Spleen (tissue), 13 donors: ENCODE measurements at regions of chr3 and their contacts with region 1.

Region 1: DNA sequence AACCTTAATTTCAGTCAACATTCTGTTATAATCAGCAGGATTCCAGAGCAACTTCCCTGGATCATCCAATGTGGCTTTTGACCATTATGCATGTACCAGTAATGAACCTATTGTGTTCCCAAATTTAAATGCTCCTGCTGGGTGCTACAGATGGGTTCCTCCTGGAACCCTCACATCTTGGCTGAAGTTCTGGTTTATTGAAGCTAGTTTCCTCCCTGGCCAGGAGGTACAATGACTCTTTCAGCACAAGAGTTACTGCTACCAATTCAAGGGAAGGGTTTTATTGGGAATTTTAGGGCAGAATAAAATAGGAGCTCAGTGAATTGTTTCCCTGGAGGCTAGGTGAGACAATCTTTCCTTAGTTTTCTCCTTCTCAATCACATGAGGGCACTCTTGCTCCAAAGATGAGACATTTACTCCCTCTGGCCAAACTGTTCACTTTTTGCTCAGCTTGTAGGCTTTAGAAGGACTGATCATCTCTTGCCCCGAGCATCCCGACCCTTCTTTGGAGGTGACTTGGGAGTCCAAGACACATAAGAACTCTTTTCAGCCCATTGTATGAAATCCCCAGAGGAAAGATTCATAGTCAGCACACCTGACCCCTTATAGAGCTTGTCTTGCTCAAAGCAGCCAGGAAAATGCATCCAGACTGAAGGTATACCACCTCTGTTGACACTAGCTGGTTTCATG is 8.8 kb upstream of the NPHP3 start:
- DNase-seq: no peak
- H3K4me3 ChIP-seq: no peak overlapping the region
- H3K27ac ChIP-seq: no peak overlapping the region
- H3K4me1 ChIP-seq: peaks cover 0 to 7% (median 3%) of the 10 kb centered on the region in 6 donors
- H3K27me3 ChIP-seq: peaks cover 0 to 17% (median 0%) of the 10 kb centered on the region in 7 donors
- CTCF ChIP-seq: peak in 6 of 11 experiments; percentile 20 to 39 (median 27)
- POLR2A ChIP-seq: no peak

Region 2: DNA sequence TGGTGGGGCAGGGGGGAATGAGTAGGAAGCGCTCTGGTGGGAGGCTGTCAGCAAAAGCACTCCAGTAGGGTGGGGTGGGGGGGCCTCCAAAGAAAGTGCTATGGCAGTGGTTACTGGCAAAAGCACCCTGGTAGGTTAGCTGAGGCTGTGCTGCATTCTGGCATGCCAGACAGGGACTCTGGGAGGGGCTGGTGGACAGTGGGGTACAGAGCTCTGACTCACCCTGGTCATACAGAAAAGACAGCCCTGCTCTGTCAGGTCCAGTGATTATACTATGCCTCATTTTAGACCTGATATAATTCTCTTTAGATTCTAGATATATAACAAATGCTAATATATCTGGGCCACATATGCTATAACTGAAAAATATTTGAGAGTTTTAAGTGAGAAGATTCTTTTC is 613.4 kb before region 1 on chr3:
- intact Hi-C with region 1: no loop called
- DNase-seq: no peak
- H3K4me3 ChIP-seq: no peak overlapping the region
- H3K27ac ChIP-seq: no peak overlapping the region
- H3K4me1 ChIP-seq: no peaks in the 10 kb centered on the region
- H3K27me3 ChIP-seq: no peaks in the 10 kb centered on the region
- CTCF ChIP-seq: no peak
- POLR2A ChIP-seq: no peak

Region 3: GRCh38 chr3:133040696-133041523 is 309.9 kb after region 1 on chr3:
- intact Hi-C with region 1: loop called (anchors 10 kb)
- DNase-seq: no peak
- H3K4me3 ChIP-seq: no peak overlapping the region
- H3K27ac ChIP-seq: peak overlapping the region in 1 of 8 donors; percentile 27
- H3K4me1 ChIP-seq: peaks cover 0 to 30% (median 16%) of the 10 kb centered on the region in 6 donors
- H3K27me3 ChIP-seq: peaks cover 0 to 56% (median 36%) of the 10 kb centered on the region in 7 donors
- CTCF ChIP-seq: peak; percentile 10 to 71 (median 55)
- POLR2A ChIP-seq: no peak

Region 4: DNA sequence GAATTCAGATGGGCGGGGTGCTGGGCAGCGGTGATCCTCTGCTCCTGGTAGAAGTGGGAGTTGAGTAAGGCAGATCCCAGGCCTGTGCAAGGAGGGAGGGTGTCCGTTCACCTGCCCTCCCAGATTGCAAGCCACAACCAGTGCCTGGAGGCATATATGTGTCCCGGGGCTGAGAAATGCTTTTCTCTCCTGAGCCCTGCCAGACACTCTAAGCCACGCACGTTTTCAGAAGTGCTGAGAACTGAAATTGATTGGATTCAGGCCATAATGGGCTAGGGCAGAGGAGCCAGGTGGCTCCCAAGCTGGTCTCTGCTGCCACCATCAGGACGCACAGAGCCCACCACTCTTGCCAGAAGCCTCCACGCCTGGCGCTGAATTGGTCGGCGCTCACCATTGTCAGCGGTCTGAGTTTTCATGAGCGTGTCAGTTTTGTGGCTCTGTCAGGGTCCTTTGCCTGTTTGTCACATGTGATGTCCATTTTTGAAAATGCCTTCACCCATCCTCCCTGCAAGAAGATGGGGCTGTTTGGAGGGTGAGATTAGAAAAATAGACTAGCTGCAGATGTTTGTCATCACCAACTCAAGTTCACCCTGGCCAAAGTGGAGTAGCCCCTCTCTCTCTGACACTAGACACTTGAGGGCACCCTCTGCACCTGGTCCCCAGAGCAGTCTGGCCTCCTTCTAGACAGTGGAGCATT is 653.4 kb after region 1 on chr3:
- intact Hi-C with region 1: loop called (anchors 5 kb)
- DNase-seq: no peak
- H3K4me3 ChIP-seq: no peak overlapping the region
- H3K27ac ChIP-seq: no peak overlapping the region
- H3K4me1 ChIP-seq: peaks cover 0 to 4% (median 0%) of the 10 kb centered on the region in 6 donors
- H3K27me3 ChIP-seq: no peaks in the 10 kb centered on the region
- CTCF ChIP-seq: peak; percentile 36 to 82 (median 76)
- POLR2A ChIP-seq: no peak

Region 5: DNA sequence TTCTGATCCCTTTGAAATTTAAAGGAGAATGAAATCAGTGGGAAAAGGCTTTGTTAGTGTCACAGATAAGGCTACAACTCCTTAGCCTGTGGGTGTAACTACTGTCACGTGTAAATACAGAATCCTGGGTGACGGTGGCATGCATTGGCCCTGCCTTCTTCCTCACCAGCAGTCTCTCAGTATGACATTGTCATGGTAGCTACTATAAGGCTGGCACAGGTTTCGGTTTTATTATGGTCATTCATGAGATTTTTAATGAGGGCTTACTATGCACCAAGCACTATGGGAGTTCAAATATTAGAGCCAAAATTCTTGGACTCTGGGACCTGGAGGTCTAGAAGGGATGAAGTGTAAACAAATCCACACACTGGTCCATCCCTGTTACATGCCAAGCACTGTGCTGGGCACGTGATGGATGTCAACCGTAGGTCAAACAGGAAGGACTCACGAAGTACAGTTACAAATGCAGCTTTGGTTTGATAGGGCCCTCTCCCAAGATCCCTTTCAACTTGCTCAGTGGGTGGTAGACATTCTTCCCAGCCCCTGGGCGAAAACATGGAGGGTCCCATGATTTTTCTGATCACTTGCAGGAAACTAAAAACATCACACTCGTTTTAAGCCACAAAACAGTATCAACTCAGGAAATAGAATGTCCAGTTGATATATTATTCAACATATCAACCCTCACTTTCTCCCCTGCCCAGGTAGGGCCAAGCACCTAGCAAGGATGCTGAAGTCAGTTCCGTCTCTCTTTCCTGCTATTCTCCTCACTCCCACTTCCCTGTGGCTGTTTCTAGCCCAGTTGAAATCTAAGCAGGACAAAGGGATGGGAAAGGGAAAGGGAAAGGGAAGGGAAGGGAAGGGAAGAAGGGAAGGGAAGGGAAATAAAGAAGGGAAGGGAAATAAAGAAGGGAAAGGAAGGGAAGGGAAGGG is 694.2 kb after region 1 on chr3:
- intact Hi-C with region 1: loop called (anchors 5 kb)
- DNase-seq: no peak
- H3K4me3 ChIP-seq: no peak overlapping the region
- H3K27ac ChIP-seq: peak overlapping the region in 1 of 8 donors; percentile 36
- H3K4me1 ChIP-seq: peaks cover 0 to 8% (median 5%) of the 10 kb centered on the region in 6 donors
- H3K27me3 ChIP-seq: peaks cover 0 to 19% (median 0%) of the 10 kb centered on the region in 7 donors
- CTCF ChIP-seq: no peak
- POLR2A ChIP-seq: peak in 1 of 3 donors; percentile 17